HCT116 (cell line): ENCODE measurements at regions of chr14 and their contacts with region 1.

Region 1: GRCh38 chr14:92106143-92106926 is at the start of gene ATXN3:
- DNase-seq: peak; percentile 97
- ATAC-seq: peak; percentile 93
- H3K4me3 ChIP-seq: peak within 1 kb of the TSS; percentile 89 to 90
- H3K27ac ChIP-seq: peak within 1 kb of the TSS; percentile 81
- H3K4me1 ChIP-seq: peaks cover 9 to 19% of the 10 kb centered on the region in 2 experiments
- H3K27me3 ChIP-seq: no peaks in the 10 kb centered on the region
- CTCF ChIP-seq: peak; percentile 39 to 89 (median 68); a peak in 4 of 6 replicates
- POLR2A ChIP-seq: peak; percentile 55
- RAD21 ChIP-seq: 0 out of 2 replicates have a peak, but pooled peaks have one; percentile 9
- total RNA-seq, gene ATXN3: 27.6 TPM

Region 2: DNA sequence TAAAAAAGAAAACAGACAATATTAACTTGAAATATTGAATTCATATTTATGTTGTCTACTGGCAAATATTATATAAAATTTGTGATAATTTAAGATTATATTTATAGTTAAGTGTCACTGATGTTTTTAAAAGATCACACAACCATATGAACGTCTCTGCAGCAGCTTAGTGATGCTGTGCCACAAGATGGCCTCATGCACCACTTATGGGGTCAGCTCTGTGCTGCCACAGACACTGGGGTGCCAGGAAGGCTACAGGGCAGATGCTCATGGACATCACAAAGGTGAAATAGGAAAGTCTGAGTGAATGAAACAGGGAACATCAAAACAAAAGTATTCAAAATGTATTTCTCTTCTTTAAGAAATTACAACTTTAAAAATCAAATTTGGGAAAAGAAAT is 13.0 kb before region 1 on chr14:
- CTCF ChIA-PET with region 1: interaction called, 11 read pairs
- POLR2A ChIA-PET with region 1: interaction called, 3 read pairs
- RAD21 ChIA-PET with region 1: no interaction called
- intact Hi-C with region 1: no loop called
- DNase-seq: no peak
- ATAC-seq: 0 out of 2 replicates have a peak, but pooled peaks have one; percentile 57
- H3K4me3 ChIP-seq: no peak overlapping the region
- H3K27ac ChIP-seq: no peak overlapping the region
- H3K4me1 ChIP-seq: no peaks in the 10 kb centered on the region
- H3K27me3 ChIP-seq: no peaks in the 10 kb centered on the region
- CTCF ChIP-seq: peak in 1 of 3 experiments; percentile 13; a peak in 1 of 6 replicates
- POLR2A ChIP-seq: no peak
- RAD21 ChIP-seq: peak; percentile 50

Region 3: GRCh38 chr14:92121670-92122350 is 15.5 kb after region 1 on chr14 and contains the starts of genes CPSF2 and NDUFB1:
- CTCF ChIA-PET with region 1: interaction called, 77 read pairs
- POLR2A ChIA-PET with region 1: interaction called, 21 read pairs
- RAD21 ChIA-PET with region 1: interaction called in 1 of 2 experiments, 3 read pairs
- intact Hi-C with region 1: no loop called
- DNase-seq: peak; percentile 48
- ATAC-seq: peak; percentile 88
- H3K4me3 ChIP-seq: peak within 1 kb of the TSS; percentile 88 to 96
- H3K27ac ChIP-seq: peak within 1 kb of the TSS; percentile 88
- H3K4me1 ChIP-seq: peaks cover 0 to 8% of the 10 kb centered on the region in 2 experiments; a peak in 2 of 4 replicates
- H3K27me3 ChIP-seq: no peaks in the 10 kb centered on the region
- CTCF ChIP-seq: no peak
- POLR2A ChIP-seq: peak; percentile 89
- RAD21 ChIP-seq: no peak
- total RNA-seq, gene CPSF2: 77.0 TPM
- total RNA-seq, gene NDUFB1: 92.5 TPM